OCI-LY7 (cell line): ENCODE measurements at regions of chr12 and their contacts with region 1.

Region 1: GRCh38 chr12:61694214-61694613 is 566.0 kb upstream of the USP15 start:
- DNase-seq: no peak
- H3K4me3 ChIP-seq: no peak overlapping the region
- H3K27ac ChIP-seq: no peak overlapping the region
- H3K4me1 ChIP-seq: no peaks in the 10 kb centered on the region
- CTCF ChIP-seq: no peak

Region 2: GRCh38 chr12:61706783-61707182 is 12.6 kb after region 1 on chr12:
- CTCF ChIA-PET with region 1: no interaction called
- POLR2A ChIA-PET with region 1: no interaction called
- intact Hi-C with region 1: no loop called
- DNase-seq: no peak
- H3K4me3 ChIP-seq: no peak overlapping the region
- H3K27ac ChIP-seq: no peak overlapping the region
- H3K4me1 ChIP-seq: no peaks in the 10 kb centered on the region
- CTCF ChIP-seq: no peak

Region 3: GRCh38 chr12:61974461-61974860 is 280.2 kb after region 1 on chr12:
- CTCF ChIA-PET with region 1: no interaction called
- POLR2A ChIA-PET with region 1: no interaction called
- intact Hi-C with region 1: loop called (anchors 5 kb)
- DNase-seq: no peak
- H3K4me3 ChIP-seq: no peak overlapping the region
- H3K27ac ChIP-seq: no peak overlapping the region
- H3K4me1 ChIP-seq: no peaks in the 10 kb centered on the region
- CTCF ChIP-seq: no peak